ENCODE measurements at regions of chr6 and their contacts with region 1.

Region 1: GRCh38 chr6:107847844-107848802 is 24.0 kb upstream of the SCML4 start:
- DNase-seq: peak; percentile 96
- H3K4me3 ChIP-seq: peak overlapping the region in 7 of 8 donors; percentile 15 to 66 (median 26)
- H3K27ac ChIP-seq: peak overlapping the region in 3 of 8 donors; percentile 16 to 45 (median 34)
- H3K4me1 ChIP-seq: peaks cover 0 to 16% (median 12%) of the 10 kb centered on the region in 6 donors
- H3K27me3 ChIP-seq: peaks cover 0 to 16% (median 0%) of the 10 kb centered on the region in 7 donors
- CTCF ChIP-seq: peak; percentile 72 to 97 (median 95)
- POLR2A ChIP-seq: no peak

Region 2: DNA sequence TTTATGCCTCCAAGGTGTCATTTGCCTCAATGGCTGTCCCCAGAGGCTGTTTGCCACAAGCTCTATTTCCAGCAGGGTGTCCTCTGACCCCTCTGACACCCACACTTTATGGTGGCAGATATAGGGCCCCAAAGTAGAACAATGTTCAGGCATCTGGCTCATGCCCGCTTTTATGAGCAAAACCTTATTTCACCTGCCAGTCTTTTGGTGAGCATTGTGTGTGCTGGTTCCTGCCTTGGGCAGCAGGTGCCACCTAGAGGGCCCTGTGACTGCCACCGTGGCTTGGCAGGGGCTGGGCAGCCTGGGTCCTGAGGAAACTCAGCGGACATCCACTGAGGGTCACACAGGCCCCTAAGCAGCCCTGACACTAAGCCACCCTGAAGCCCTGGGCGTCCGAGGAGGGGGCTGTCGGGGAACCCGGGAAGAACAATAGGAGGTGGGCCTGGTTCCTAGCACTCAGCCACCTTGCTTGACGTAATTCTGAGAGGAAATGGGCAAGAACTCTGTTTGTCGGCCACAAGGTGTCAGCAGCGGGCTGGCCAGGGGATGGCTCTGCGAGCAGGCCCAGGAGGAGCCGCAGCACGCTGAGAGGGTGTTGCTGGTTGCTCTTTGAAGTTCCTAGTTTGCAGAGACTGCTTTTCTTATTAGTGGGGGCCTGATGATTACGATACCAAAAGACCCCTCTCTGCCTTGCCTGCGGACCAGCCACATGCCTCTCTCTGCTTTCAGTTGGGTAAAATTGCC is 173.0 kb before region 1 on chr6:
- intact Hi-C with region 1: loop called (anchors 10 kb)
- DNase-seq: peak; percentile 97
- H3K4me3 ChIP-seq: peak overlapping the region in 1 of 8 donors; percentile 51
- H3K27ac ChIP-seq: peak overlapping the region in 5 of 8 donors; percentile 32 to 79 (median 46)
- H3K4me1 ChIP-seq: peaks cover 16 to 40% (median 29%) of the 10 kb centered on the region in 6 donors
- H3K27me3 ChIP-seq: no peaks in the 10 kb centered on the region
- CTCF ChIP-seq: peak; percentile 70 to 93 (median 88)
- POLR2A ChIP-seq: no peak

Region 3: DNA sequence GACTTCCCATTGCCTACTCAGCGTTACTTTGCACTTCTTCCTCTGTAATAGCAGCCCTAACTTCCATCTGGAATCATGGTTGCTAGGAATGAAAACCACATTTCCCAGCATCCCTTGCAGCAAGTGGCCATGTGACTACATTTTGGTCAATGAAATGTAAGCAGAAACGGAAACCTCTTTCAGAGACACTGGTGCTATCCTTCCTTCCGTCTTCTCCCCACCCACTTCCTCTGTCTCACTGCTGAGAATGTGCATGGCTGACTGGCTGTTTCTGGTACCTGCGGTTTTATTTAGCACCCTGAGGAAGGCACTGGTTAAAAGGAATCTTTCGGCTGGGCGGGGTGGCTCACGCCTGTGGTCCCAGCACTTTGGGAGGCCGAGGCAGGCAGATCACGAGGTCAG is 131.4 kb before region 1 on chr6:
- intact Hi-C with region 1: loop called (anchors 10 kb)
- DNase-seq: peak; percentile 82
- H3K4me3 ChIP-seq: peak overlapping the region in 1 of 8 donors; percentile 34
- H3K27ac ChIP-seq: peak overlapping the region in 5 of 8 donors; percentile 20 to 60 (median 44)
- H3K4me1 ChIP-seq: peaks cover 11 to 46% (median 34%) of the 10 kb centered on the region in 6 donors
- H3K27me3 ChIP-seq: no peaks in the 10 kb centered on the region
- CTCF ChIP-seq: no peak
- POLR2A ChIP-seq: no peak

Region 4: DNA sequence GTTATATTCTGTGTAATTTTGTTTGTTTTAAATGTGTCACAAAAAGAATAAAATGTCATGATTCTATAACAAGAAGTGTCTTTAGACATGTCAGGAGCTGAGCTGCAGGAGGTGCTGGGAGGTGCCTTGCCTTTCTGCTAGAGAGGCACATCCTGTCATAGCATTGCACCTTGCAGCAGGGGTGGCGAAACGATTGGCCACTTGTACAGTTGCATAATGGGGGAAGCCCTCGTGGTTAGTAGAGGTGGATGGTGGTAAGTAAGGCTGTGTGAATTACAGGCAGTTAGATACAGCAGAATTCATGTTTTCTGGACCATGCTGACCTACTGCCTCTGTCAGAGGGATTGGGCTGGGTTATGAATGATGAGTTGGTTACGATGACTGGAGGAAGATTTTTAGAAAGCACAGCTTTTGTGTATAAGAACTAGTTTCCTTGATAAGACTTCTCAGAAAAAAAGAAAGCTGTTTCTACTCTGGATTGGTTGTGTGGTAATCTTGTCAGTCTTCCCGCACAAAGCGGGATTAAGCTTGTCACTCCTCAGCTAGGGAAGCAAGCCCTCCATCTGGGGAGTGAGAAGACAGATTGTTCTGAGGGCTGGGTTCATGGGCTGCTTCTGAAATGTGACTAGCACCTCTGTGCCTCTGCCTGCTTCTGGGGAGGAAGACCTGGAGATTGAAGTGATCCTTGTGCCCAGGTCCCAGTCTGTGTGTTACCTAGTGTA is 787.5 kb after region 1 on chr6:
- intact Hi-C with region 1: no loop called
- DNase-seq: peak; percentile 89
- H3K4me3 ChIP-seq: peak overlapping the region in 1 of 8 donors; percentile 18
- H3K27ac ChIP-seq: peak overlapping the region in 6 of 8 donors; percentile 33 to 79 (median 70)
- H3K4me1 ChIP-seq: peaks cover 29 to 99% (median 79%) of the 10 kb centered on the region in 6 donors
- H3K27me3 ChIP-seq: no peaks in the 10 kb centered on the region
- CTCF ChIP-seq: no peak
- POLR2A ChIP-seq: no peak